Activated T-helper 1 cell treated with anti-CD3 and anti-CD28 coated beads, Interleukin-12 subunit alpha, Interleukin-12 subunit beta, Interleukin-2, Interleukin-4 antibody, amounts not matched to agents 30 ng/mL and 10 ng/mL and 1 ng/mL, durations not matched to agents 14 hours and 24 hours and 36 hours (primary cell): ENCODE measurements at regions of chr14 and their contacts with region 1.

Region 1: DNA sequence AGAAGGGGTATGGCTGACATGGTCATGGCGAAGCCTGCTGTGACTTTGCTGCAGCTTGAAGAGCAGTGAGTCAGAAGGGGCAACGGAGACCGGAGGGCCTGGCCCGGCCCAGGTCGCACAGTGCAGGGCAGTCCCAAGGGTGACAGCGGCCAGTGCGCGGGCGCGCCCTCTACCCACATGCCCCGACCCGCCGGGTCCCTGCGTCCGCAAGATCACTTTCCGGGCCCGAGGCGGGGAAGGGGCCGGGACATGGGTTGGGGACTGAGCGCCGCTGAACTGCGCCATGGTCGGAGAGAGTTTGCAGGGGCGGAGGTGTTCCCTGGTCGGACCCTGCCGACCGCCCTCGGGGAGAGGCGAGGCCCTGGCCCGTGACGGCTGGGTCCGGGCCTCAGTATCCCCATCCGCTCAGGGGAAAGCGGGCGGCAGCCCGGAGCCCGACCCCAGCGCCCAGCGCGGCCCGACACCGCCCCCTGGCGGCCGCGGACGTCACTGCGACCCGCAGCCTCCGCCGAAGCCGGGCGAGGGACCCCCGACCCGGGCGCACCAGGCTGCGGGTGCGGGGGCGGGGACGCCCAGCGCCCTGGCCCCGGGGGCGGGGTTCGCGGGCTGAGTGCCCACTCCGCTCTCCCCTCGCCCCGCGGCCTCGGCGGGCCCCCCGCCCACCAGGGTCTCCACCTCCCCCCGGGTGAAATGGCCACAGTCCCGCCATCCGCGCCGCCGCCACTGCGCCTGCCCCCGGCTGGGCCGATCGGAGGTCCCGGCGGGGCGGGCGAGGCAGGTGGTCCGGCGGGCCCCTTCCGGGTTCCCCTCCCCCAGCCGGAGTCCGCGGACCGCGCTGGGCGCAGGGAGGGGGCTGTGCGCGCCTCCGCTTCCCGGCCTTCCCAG is 7.2 kb upstream of the ANKRD9 start:
- DNase-seq: peak; percentile 59
- H3K4me3 Mint-ChIP-seq: peak overlapping the region; percentile 82
- H3K27ac Mint-ChIP-seq: peak overlapping the region; percentile 61
- H3K4me1 Mint-ChIP-seq: no peaks in the 10 kb centered on the region
- H3K27me3 Mint-ChIP-seq: peaks cover 9% of the 10 kb centered on the region

Region 2: GRCh38 chr14:102235275-102235897 is 281.4 kb before region 1 on chr14:
- intact Hi-C with region 1: loop called (anchors 2 kb)
- DNase-seq: peak; percentile 68
- H3K4me3 Mint-ChIP-seq: no peak overlapping the region
- H3K27ac Mint-ChIP-seq: no peak overlapping the region
- H3K4me1 Mint-ChIP-seq: no peaks in the 10 kb centered on the region
- H3K27me3 Mint-ChIP-seq: no peaks in the 10 kb centered on the region

Region 3: DNA sequence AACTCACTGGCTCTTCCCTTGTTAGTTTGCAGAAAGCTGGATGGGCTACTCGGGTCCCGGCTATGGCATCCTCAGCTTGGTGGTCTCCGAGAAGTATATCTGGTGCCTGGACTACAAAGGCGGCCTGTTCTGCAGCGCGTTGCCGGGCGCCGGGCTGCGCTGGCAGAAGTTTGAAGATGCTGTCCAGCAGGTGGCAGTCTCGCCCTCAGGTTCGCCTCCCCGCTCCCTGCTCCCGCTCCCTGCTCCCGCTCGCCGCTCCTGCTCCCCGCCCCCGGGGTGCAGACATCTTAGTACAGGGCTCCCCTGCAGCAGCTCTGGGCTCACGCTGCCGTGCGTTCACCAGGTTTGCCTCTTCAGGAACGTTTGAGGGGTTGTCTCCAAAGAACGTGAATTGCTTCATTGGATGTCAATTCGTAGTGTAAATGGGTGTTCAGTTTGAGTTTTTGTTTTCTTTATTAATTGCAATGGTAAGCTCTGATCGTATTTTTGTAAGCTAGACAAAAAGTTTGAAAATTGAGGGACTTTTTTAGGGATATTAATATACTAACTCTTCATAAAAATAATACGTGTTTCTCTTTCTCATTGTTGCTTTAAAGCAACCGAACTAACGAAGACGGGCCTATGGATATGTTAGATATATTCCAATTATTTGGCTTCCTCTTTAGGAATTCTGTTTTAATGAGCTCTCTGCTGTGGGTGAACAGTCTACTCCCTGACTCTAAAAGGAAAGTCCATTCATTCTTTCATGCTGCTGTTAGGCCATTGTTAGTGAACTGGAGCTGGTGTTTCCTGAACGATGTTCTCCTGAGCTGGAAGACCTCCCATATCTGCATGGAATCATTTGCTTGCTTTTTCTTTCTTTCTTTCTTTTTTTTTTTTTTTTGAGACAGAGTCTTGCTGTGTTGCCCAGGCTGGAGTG is 78.5 kb before region 1 on chr14:
- intact Hi-C with region 1: loop called (anchors 1 kb)
- DNase-seq: peak; percentile 64
- H3K4me3 Mint-ChIP-seq: peak overlapping the region; percentile 19
- H3K27ac Mint-ChIP-seq: no peak overlapping the region
- H3K4me1 Mint-ChIP-seq: peaks cover 5% of the 10 kb centered on the region
- H3K27me3 Mint-ChIP-seq: no peaks in the 10 kb centered on the region